ENCODE measurements at regions of chr12 and their contacts with region 1.

Region 1: DNA sequence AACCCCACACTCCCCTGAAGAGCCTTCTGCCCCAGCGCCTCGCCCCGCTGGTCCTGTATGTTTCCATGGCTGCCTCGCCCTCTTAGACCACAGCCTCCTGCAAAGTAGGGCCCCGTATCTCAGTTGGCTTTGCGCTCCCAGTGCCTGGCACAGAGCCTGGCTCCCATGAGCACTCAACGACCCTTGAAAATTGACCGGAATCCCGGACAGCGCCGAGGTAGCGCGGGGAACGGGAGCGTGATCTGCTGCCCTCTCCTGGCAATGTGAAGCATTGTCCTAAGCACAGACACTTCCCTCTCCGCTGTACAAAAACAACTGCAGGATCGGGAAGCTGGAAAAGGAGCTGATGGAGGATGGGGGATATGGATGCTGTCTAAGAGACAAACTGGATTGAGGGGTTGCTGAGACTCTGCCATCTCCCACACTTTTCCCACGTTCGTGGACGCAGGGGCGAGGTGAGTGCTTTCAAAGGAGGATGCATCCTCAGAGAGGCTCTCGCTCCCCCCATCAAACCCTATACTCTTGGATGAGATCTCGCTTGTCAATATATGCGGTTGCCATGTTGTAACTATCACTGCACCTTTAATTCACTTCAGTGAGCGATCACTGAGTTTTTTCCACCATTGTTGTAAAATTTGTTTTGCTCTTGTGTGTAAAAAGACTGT is 10.7 kb upstream of the FKBP4 start:
- DNase-seq: peak; percentile 44
- H3K4me3 Mint-ChIP-seq: no peak overlapping the region
- H3K27ac Mint-ChIP-seq: no peak overlapping the region
- H3K4me1 Mint-ChIP-seq: peaks cover 9% of the 10 kb centered on the region
- H3K27me3 Mint-ChIP-seq: peaks cover 27% of the 10 kb centered on the region

Region 2: GRCh38 chr12:2682296-2683251 is 101.5 kb before region 1 on chr12:
- CTCF ChIA-PET with region 1: interaction called, 54 read pairs
- POLR2A ChIA-PET with region 1: interaction called, 3 read pairs
- DNase-seq: peak; percentile 61
- H3K4me3 Mint-ChIP-seq: peak overlapping the region; percentile 49
- H3K27ac Mint-ChIP-seq: peak overlapping the region; percentile 70
- H3K4me1 Mint-ChIP-seq: peaks cover 11% of the 10 kb centered on the region
- H3K27me3 Mint-ChIP-seq: no peaks in the 10 kb centered on the region

Region 3: DNA sequence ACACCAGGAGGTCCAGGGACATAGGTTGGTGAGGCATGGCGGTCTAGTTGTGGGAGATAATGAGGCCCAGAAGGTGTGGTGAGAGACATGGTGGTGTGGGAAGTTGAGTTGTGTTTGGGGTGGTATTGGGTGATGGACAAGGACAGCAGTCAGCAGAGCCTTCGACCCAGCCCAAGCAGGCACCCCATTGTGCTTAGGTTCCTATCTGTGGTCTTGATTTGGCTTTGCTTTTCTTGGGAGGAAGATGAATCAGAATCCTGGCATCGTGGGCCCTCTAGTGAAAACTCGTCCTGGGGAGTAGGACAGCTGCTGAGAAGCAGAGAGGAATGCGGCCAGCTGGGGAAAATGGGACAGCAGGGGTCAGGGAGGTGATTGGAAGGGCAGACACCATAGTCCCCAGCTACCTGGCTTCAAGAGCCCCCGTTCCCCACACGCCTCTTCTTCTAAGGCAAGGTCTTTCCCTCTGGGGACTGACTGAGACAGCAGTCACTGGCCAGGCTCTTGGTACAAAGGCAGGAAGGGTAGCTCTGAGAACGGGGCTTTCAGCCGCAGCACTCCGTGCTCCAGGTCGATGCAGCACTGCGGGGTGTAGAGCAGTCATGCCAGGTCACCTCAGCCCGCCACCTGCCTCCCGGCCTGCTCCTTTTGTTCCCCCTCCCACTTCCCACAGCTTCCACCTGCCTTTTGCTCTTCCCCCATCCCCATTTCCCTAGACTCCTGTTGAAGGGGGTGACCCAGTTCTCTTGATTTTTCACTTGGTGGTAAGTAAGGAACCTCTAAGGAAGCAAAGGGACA is 42.9 kb after region 1 on chr12:
- CTCF ChIA-PET with region 1: no interaction called
- POLR2A ChIA-PET with region 1: no interaction called
- DNase-seq: no peak
- H3K4me3 Mint-ChIP-seq: no peak overlapping the region
- H3K27ac Mint-ChIP-seq: no peak overlapping the region
- H3K4me1 Mint-ChIP-seq: no peaks in the 10 kb centered on the region
- H3K27me3 Mint-ChIP-seq: no peaks in the 10 kb centered on the region